GM10248 (cell line): ENCODE measurements at regions of chr7 and their contacts with region 1.

Region 1: DNA sequence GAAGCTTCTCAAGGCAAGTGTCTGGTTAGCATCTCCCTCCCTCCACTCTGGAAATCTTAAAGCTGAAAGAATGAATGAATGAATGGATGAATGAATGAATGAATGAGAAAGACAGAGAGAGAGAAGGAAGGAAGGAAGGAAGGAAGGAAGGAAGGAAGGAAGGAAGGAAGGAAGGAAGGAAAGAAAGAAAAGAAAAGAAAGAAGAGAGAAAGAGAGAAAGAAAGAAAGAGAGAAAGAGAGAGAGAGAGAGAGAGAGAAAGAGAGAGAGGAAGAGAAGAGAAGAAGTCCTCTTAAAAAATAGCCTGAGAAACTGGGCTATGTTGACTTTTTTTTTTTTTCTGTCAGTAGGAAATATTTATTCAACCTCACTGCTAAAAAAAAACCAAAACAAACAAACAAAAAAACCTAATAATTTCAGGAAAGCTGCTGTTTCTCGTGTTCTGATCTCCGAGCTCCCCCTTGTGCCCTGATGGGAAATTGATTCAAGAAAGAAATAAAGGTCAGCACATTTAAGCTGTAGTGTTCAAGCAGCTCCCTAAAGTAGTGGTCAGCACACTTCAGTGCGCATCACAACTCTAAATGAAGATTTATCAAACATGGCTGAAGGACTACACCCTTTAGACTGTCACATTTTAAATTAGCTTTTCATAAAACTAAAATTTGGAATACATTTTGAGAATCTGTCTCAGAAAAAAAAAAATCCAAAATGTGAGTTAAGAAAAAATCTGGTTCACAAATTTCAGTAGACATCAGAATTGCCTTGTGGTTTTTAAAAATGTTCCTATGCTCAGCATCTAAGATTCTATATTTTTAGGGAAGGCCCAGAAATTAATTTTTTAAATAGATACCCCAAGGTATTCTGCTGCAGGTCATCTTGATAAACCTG is 154.3 kb downstream of the ELAPOR2 start:
- DNase-seq: no peak
- CTCF ChIP-seq: peak; percentile 71

Region 2: GRCh38 chr7:86667732-86668131 is 237.5 kb before region 1 on chr7:
- CTCF ChIA-PET with region 1: interaction called, 35 read pairs
- POLR2A ChIA-PET with region 1: no interaction called
- DNase-seq: no peak
- CTCF ChIP-seq: peak; percentile 41